GM10248 (cell line): ENCODE measurements at regions of chr10 and their contacts with region 1.

Region 1: DNA sequence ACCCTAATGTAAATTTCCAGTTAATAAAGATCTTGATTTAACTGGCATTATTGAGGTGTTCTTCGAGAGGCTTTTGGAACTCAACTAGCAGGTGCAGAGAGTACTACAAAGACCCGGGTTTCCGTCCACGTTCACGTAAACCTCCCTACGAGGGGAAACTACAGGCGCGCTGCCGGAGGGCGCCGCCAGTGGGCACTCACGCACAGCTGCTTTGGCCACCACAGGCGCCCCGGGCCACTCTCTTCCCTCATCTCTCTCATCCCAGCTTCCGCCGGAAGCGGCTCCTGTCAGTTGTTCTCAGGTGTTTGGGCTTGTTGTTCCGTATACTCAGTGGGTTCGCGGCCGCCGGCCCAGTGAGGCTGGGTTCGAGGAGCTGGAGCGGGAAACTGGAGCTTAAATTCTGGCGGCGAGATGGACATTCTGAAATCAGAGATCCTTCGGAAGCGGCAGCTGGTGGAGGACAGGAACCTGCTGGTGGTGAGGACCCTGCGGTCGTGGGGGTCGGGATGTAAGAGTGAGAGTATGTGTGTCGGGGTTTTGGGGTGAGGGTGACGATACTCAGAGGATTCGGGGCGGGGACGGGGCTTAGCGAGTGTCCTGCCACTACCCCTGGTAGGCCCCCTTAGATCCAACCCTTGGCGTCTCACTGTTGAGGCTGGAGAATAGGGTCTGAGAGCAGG is at the start of gene PRPF18:
- DNase-seq: peak; percentile 97
- CTCF ChIP-seq: peak; percentile 98

Region 2: DNA sequence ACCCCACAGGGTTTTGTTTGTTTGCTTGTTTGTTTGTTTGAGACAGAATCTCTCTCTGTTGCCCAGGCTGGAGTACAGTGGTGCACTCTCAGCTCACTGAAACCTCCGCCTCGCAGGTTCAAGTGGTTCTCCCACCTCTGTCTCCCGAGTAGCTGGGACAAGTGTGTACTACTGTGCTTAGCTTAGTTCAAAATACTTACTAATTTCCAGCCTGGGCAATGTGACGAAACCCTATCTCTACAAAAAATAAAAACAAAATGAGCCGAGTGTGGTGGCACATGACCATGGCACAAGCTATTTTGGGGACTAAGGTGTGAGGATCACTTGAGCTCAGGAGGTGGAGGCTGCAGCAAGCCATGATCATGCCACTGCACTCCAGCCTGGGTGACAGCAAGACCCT is 15.3 kb before region 1 on chr10:
- CTCF ChIA-PET with region 1: interaction called, 11 read pairs
- POLR2A ChIA-PET with region 1: no interaction called
- DNase-seq: no peak
- CTCF ChIP-seq: no peak